ENCODE measurements at regions of chr1 and their contacts with region 1.

Region 1: GRCh38 chr1:104780470-104781078 is 1030.9 kb downstream of the AMY1C start:
- DNase-seq: peak; percentile 31
- CTCF ChIP-seq: peak; percentile 65

Region 2: GRCh38 chr1:104629589-104629988 is 151.0 kb before region 1 on chr1:
- CTCF ChIA-PET with region 1: no interaction called
- POLR2A ChIA-PET with region 1: no interaction called
- DNase-seq: no peak
- CTCF ChIP-seq: no peak

Region 3: GRCh38 chr1:105793536-105794146 is 1013.1 kb after region 1 on chr1:
- CTCF ChIA-PET with region 1: interaction called, 12 read pairs
- POLR2A ChIA-PET with region 1: no interaction called
- DNase-seq: peak; percentile 17
- CTCF ChIP-seq: peak; percentile 67

Measured in GM10248 (cell line).